ENCODE measurements at regions of chr22 and their contacts with region 1.

Region 1: DNA sequence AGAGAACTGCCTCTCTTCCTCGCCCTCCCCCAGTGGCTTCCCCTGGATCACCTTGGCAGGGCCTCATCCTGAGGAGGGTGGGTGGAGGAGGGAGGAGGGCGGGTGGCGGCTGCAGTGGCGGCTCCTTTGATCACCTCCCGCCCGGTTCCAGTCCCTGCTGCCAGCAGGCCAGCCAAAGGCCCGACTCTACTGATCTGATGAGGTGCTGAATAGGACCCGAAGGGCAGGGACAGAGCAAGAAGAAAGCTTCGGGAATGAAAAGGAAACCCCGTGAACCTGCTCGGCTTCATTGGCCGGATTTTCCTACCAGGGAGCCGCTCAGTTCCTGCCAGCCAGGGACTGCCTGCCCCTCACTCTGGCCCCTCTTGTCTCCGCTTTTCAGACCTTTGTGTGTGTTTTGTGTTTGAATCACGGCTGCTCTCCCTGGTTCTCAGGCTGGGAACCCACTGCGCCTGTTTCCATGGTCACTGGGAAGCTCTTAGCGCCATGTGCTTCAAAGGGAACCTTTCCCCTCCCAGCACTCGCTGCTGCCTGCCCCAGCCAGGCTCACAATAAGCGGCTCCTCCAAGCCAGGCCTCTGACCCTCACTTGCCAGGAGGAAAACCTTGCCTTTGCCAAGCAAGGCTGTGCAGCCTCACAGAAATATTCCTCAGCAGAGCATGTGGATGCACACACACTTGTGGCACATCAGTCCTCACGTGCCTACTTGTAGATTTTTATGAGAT is 56.8 kb downstream of the C22orf31 start:
- DNase-seq: no peak

Region 2: GRCh38 chr22:28951969-28952521 is 52.8 kb before region 1 on chr22:
- intact Hi-C with region 1: loop called (anchors 10 kb)
- DNase-seq: no peak